ENCODE measurements at regions of chr17 and their contacts with region 1.

Region 1: GRCh38 chr17:43125133-43125966 is at the start of gene BRCA1:
- DNase-seq: peak; percentile 97

Region 2: GRCh38 chr17:43170766-43171585 is 45.6 kb after region 1 on chr17 and contains the start of gene NBR1:
- CTCF ChIA-PET with region 1: interaction called, 3 read pairs
- POLR2A ChIA-PET with region 1: interaction called, 17 read pairs
- DNase-seq: peak; percentile 93

Region 3: GRCh38 chr17:43377056-43377810 is 251.9 kb after region 1 on chr17:
- CTCF ChIA-PET with region 1: no interaction called
- POLR2A ChIA-PET with region 1: no interaction called
- DNase-seq: no peak